Naive thymus-derived CD4-positive, alpha-beta T cell (primary cell): ENCODE measurements at regions of chr5 and their contacts with region 1.

Region 1: GRCh38 chr5:145681686-145682085 is 153.5 kb downstream of the PRELID2 start:
- DNase-seq: peak in 1 of 9 donors; percentile 24
- ATAC-seq: peak; percentile 68
- H3K4me3 ChIP-seq: no peak overlapping the region
- H3K4me3 Mint-ChIP-seq: no peak overlapping the region
- H3K27ac ChIP-seq: no peak overlapping the region
- H3K27ac Mint-ChIP-seq: no peak overlapping the region
- H3K4me1 ChIP-seq: no peaks in the 10 kb centered on the region
- H3K4me1 Mint-ChIP-seq: peaks cover 0 to 2% (median 0%) of the 10 kb centered on the region in 7 donors
- H3K27me3 ChIP-seq: no peaks in the 10 kb centered on the region
- H3K27me3 Mint-ChIP-seq: no peaks in the 10 kb centered on the region

Region 2: GRCh38 chr5:145598184-145598583 is 83.5 kb before region 1 on chr5:
- CTCF ChIA-PET with region 1: no interaction called
- POLR2A ChIA-PET with region 1: no interaction called
- intact Hi-C with region 1: no loop called
- DNase-seq: no peak
- ATAC-seq: no peak
- H3K4me3 ChIP-seq: no peak overlapping the region
- H3K4me3 Mint-ChIP-seq: no peak overlapping the region
- H3K27ac ChIP-seq: no peak overlapping the region
- H3K27ac Mint-ChIP-seq: no peak overlapping the region
- H3K4me1 ChIP-seq: no peaks in the 10 kb centered on the region
- H3K4me1 Mint-ChIP-seq: no peaks in the 10 kb centered on the region
- H3K27me3 ChIP-seq: no peaks in the 10 kb centered on the region
- H3K27me3 Mint-ChIP-seq: no peaks in the 10 kb centered on the region

Region 3: GRCh38 chr5:145825751-145826180 is 144.1 kb after region 1 on chr5:
- CTCF ChIA-PET with region 1: no interaction called
- POLR2A ChIA-PET with region 1: no interaction called
- intact Hi-C with region 1: loop called in 1 of 2 experiments (anchors 1 kb)
- DNase-seq: peak in 3 of 9 donors; percentile 4 to 7 (median 5)
- ATAC-seq: peak; percentile 50
- H3K4me3 ChIP-seq: no peak overlapping the region
- H3K4me3 Mint-ChIP-seq: no peak overlapping the region
- H3K27ac ChIP-seq: no peak overlapping the region
- H3K27ac Mint-ChIP-seq: no peak overlapping the region
- H3K4me1 ChIP-seq: no peaks in the 10 kb centered on the region
- H3K4me1 Mint-ChIP-seq: peaks cover 0 to 8% (median 0%) of the 10 kb centered on the region in 7 donors
- H3K27me3 ChIP-seq: no peaks in the 10 kb centered on the region
- H3K27me3 Mint-ChIP-seq: peaks cover 0 to 11% (median 0%) of the 10 kb centered on the region in 5 donors

Region 4: DNA sequence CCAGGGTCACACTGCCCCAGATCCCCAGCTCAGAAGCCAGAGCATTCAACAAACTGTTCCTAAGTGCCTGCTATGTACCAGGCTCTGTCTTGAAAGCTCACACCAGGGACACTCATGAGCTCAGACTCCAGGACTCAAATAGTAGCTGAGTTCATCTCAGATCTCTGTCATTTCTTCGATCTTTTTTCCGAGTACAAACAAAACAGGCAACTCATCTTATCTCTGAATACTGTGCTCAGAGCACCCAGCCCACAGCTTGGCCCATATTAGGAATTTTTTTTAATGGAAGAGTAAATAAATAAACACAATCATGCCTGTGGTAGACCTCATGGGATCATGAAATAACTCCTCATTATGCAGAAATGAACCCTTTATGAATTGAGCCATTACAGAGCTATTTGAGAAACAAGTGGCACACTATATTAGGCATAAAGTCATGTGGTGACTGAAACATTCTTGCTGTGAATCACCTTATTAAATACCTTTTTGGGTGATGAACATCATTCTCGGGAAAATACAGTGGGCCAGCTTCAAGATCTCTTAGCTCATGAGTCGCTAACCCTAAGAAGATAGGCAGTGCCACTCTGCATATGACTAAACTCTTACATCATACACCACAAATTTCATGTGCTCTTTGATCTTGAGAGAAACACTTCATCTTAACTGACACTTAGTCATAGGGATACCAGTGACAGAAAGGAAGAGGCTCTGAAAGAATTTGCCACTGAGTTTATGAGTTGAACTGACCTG is 264.6 kb after region 1 on chr5:
- CTCF ChIA-PET with region 1: no interaction called
- POLR2A ChIA-PET with region 1: no interaction called
- intact Hi-C with region 1: no loop called
- DNase-seq: no peak
- ATAC-seq: peak; percentile 74
- H3K4me3 ChIP-seq: no peak overlapping the region
- H3K4me3 Mint-ChIP-seq: peak overlapping the region in 1 of 10 donors; percentile 43
- H3K27ac ChIP-seq: no peak overlapping the region
- H3K27ac Mint-ChIP-seq: no peak overlapping the region
- H3K4me1 ChIP-seq: no peaks in the 10 kb centered on the region
- H3K4me1 Mint-ChIP-seq: peaks cover 0 to 31% (median 0%) of the 10 kb centered on the region in 7 donors
- H3K27me3 ChIP-seq: no peaks in the 10 kb centered on the region
- H3K27me3 Mint-ChIP-seq: peaks cover 7 to 34% (median 18%) of the 10 kb centered on the region in 5 donors

Region 5: DNA sequence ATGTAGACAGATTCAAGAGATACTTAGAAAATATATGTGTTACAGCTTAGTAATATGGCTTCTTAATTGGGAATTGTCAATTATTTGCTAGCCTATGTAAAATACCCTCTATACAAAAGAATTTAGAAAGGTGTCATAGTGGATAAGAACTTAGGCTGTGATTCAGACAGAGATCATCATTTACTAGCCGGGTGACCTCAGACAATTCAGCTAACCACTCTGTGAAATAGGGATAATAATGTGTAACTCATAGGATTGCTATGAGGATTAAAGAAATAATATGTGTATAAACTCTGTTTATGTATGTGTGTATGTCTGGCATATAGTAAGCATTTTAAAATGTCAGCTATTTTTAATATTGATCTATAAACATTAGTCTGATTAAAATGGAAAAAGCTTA is 506.7 kb after region 1 on chr5:
- CTCF ChIA-PET with region 1: no interaction called
- POLR2A ChIA-PET with region 1: no interaction called
- intact Hi-C with region 1: no loop called
- DNase-seq: no peak
- ATAC-seq: no peak
- H3K4me3 ChIP-seq: no peak overlapping the region
- H3K4me3 Mint-ChIP-seq: no peak overlapping the region
- H3K27ac ChIP-seq: no peak overlapping the region
- H3K27ac Mint-ChIP-seq: no peak overlapping the region
- H3K4me1 ChIP-seq: no peaks in the 10 kb centered on the region
- H3K4me1 Mint-ChIP-seq: peaks cover 0 to 10% (median 0%) of the 10 kb centered on the region in 7 donors
- H3K27me3 ChIP-seq: no peaks in the 10 kb centered on the region
- H3K27me3 Mint-ChIP-seq: peaks cover 6 to 17% (median 9%) of the 10 kb centered on the region in 5 donors

Region 6: GRCh38 chr5:146426853-146427618 is 745.4 kb after region 1 on chr5:
- CTCF ChIA-PET with region 1: interaction called, 3 read pairs
- POLR2A ChIA-PET with region 1: no interaction called
- intact Hi-C with region 1: loop called in 1 of 2 experiments (anchors 5 kb)
- DNase-seq: peak in 5 of 9 donors; percentile 33 to 47 (median 45)
- ATAC-seq: peak; percentile 74
- H3K4me3 ChIP-seq: no peak overlapping the region
- H3K4me3 Mint-ChIP-seq: peak overlapping the region in 1 of 10 donors; percentile 33
- H3K27ac ChIP-seq: no peak overlapping the region
- H3K27ac Mint-ChIP-seq: peak overlapping the region in 2 of 9 donors; percentile 5 to 22
- H3K4me1 ChIP-seq: no peaks in the 10 kb centered on the region
- H3K4me1 Mint-ChIP-seq: peaks cover 0 to 8% (median 5%) of the 10 kb centered on the region in 7 donors
- H3K27me3 ChIP-seq: no peaks in the 10 kb centered on the region
- H3K27me3 Mint-ChIP-seq: peaks cover 11 to 28% (median 19%) of the 10 kb centered on the region in 5 donors